Activated CD4-positive, alpha-beta memory T cell treated with anti-CD3 and anti-CD28 coated beads, Interleukin-2, amount 10 ng/mL, durations not matched to agents 7 days and 5 days (primary cell): ENCODE measurements at regions of chr14 and their contacts with region 1.

Region 1: GRCh38 chr14:64294672-64295413 is 672 bp upstream of the ESR2 start:
- DNase-seq: peak; percentile 86
- H3K4me3 Mint-ChIP-seq: peak overlapping the region; percentile 67
- H3K27ac Mint-ChIP-seq: no peak overlapping the region
- H3K4me1 Mint-ChIP-seq: peaks cover 33% of the 10 kb centered on the region
- H3K27me3 Mint-ChIP-seq: peaks cover 25% of the 10 kb centered on the region

Region 2: GRCh38 chr14:64012003-64012402 is 282.8 kb before region 1 on chr14:
- CTCF ChIA-PET with region 1: interaction called, 23 read pairs
- POLR2A ChIA-PET with region 1: interaction called, 3 read pairs
- DNase-seq: no peak
- H3K4me3 Mint-ChIP-seq: no peak overlapping the region
- H3K27ac Mint-ChIP-seq: no peak overlapping the region
- H3K4me1 Mint-ChIP-seq: no peaks in the 10 kb centered on the region
- H3K27me3 Mint-ChIP-seq: no peaks in the 10 kb centered on the region

Region 3: DNA sequence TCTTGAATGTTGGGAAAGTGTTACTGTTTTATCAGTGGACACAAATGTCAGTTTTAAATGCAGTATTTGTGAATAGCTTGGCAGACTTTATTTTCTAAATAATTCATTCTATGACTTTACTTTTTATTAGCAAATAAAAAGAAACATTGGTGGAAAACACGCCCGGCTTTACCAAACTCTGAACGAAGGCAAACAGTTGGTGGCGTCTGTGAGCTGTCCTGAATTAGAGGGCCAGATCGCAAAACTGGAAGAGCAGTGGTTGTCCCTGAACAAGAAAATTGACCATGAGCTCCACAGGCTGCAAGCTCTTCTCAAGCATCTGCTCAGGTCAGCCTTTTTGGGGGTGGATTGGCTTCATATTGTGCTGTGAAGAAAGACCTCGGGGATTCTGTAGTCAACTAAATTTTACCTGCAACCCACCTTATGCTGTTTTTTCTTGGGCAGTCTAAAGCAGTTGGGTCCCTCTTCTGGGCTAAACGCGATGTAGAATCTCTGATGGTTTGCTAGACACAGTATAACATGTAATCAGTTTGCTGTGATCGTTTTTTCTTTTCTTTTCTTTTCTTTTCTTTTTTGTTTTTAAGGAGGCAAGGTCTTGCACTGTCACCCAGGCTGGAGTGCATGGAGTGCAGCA is 157.1 kb before region 1 on chr14:
- CTCF ChIA-PET with region 1: interaction called, 18 read pairs
- POLR2A ChIA-PET with region 1: no interaction called
- DNase-seq: no peak
- H3K4me3 Mint-ChIP-seq: no peak overlapping the region
- H3K27ac Mint-ChIP-seq: no peak overlapping the region
- H3K4me1 Mint-ChIP-seq: no peaks in the 10 kb centered on the region
- H3K27me3 Mint-ChIP-seq: no peaks in the 10 kb centered on the region

Region 4: GRCh38 chr14:64278458-64278857 is 16.4 kb before region 1 on chr14:
- CTCF ChIA-PET with region 1: interaction called, 11 read pairs
- POLR2A ChIA-PET with region 1: interaction called, 4 read pairs
- DNase-seq: no peak
- H3K4me3 Mint-ChIP-seq: no peak overlapping the region
- H3K27ac Mint-ChIP-seq: no peak overlapping the region
- H3K4me1 Mint-ChIP-seq: peaks cover 16% of the 10 kb centered on the region
- H3K27me3 Mint-ChIP-seq: peaks cover 1% of the 10 kb centered on the region

Region 5: GRCh38 chr14:64363265-64363846 is 68.5 kb after region 1 on chr14:
- CTCF ChIA-PET with region 1: no interaction called
- POLR2A ChIA-PET with region 1: no interaction called
- DNase-seq: no peak
- H3K4me3 Mint-ChIP-seq: no peak overlapping the region
- H3K27ac Mint-ChIP-seq: no peak overlapping the region
- H3K4me1 Mint-ChIP-seq: peaks cover 3% of the 10 kb centered on the region
- H3K27me3 Mint-ChIP-seq: no peaks in the 10 kb centered on the region

Region 6: DNA sequence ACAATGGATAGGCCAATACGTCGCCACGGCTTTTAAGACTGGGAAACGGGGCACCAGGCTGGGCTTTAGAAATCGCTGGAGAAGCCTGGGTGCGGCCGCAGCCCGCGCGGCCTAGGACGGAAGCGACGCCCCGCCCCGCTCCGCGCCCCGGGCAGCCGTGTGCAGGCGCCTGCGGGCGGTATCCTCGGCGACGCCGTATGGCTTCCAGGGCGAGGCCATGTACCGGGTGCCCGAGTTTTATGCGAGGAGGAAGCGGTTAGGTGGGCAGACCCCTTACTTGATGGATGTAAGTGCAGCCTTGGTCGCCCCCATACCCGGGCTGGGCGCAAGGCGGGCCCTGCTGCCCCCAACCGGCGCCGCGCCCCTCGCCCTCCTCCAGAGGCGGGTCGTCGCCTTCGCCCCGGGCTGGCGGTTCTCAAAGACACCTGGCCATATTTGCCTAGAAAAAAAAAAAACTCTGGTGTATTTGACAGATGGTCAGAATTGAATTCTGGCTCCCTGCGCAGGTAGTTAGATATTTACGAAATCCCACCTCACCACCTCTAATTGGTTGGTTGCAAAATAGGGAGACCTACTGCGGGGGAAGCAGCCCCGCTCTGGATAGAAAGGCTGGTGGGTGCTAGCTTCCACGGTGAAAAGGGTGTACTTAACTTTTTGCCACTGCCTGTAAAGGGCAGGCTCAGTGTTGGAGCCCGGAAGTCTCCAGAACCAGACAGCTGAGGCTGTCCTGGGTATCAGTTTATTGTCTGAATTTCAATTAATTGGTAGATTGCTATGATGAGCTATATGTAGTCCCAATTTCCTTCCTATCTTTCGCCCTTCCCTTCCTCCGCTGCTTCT is 255.2 kb after region 1 on chr14 and contains the start of gene PPP1R36:
- CTCF ChIA-PET with region 1: no interaction called
- POLR2A ChIA-PET with region 1: no interaction called
- DNase-seq: peak; percentile 58
- H3K4me3 Mint-ChIP-seq: peak within 1 kb of the TSS; percentile 33
- H3K27ac Mint-ChIP-seq: no peak within 1 kb of the TSS
- H3K4me1 Mint-ChIP-seq: peaks cover 17% of the 10 kb centered on the region
- H3K27me3 Mint-ChIP-seq: peaks cover 34% of the 10 kb centered on the region
- total RNA-seq, gene PPP1R36: 0.53 TPM in 1 of 2 experiments, not detected in the other